ENCODE measurements at regions of chr7 and their contacts with region 1.

Region 1: GRCh38 chr7:2844165-2844898 is at the start of gene GNA12:
- DNase-seq: peak; percentile 97 to 100 (median 99)
- H3K4me3 ChIP-seq: peak within 1 kb of the TSS; percentile 35 to 90 (median 76)
- H3K27ac ChIP-seq: peak within 1 kb of the TSS in 38 of 59 donors; percentile 5 to 85 (median 65)
- H3K27me3 ChIP-seq: no peaks in the 10 kb centered on the region
- CTCF ChIP-seq: peak in 15 of 56 donors; percentile 4 to 32 (median 18)
- total RNA-seq, gene GNA12: 45.2 to 162 (median 67.4) TPM

Region 2: DNA sequence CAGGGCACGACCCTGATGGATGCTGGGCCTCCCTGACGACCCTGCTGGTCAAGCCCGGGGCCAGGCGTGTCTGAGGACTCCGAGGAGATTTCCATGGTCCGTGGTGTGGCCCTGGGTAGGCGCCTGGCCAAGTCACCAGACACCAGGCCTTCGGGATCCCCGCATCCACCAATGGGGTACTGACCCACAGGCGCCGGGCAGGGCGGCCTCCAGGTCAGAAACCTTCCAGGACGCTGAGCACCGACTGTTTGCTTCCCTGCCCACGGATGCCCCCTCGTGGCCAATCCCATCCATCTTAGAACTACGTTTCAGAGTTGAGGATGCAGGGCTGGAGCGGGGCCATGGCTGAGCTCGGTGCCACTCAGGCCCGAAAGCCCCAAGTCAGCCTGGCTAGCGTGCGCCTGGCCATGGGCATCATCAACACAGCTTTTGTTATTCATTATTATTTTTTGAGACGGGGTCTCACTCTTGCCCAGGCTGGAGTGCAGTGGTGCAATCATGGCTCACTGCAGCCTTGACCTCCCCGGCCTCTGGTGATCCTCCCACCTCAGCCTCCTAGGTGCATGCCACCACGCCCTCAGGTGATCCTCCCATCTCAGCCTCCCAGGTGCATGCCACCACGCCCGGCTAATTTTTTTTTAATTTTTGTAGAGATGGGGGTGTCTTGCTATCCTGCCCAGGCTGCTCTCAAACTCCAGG is 163.4 kb before region 1 on chr7:
- intact Hi-C with region 1: loop called in 1 of 2 experiments (anchors 5 kb)
- DNase-seq: peak; percentile 80 to 90 (median 88)
- H3K4me3 ChIP-seq: peak overlapping the region in 13 of 59 donors; percentile 3 to 57 (median 42)
- H3K27ac ChIP-seq: peak overlapping the region in 55 of 59 donors; percentile 44 to 95 (median 90)
- H3K27me3 ChIP-seq: peaks cover 0 to 2% (median 0%) of the 10 kb centered on the region in 45 donors
- CTCF ChIP-seq: peak; percentile 56 to 92 (median 82)

Region 3: GRCh38 chr7:2709553-2710285 is 134.6 kb before region 1 on chr7:
- intact Hi-C with region 1: loop called in 1 of 2 experiments (anchors 10 kb)
- DNase-seq: peak in 9 of 10 donors; percentile 59 to 83 (median 66)
- H3K4me3 ChIP-seq: peak overlapping the region in 11 of 59 donors; percentile 6 to 43 (median 22)
- H3K27ac ChIP-seq: peak overlapping the region in 2 of 59 donors; percentile 57 to 70
- H3K27me3 ChIP-seq: no peaks in the 10 kb centered on the region
- CTCF ChIP-seq: peak; percentile 34 to 97 (median 86)

Region 4: DNA sequence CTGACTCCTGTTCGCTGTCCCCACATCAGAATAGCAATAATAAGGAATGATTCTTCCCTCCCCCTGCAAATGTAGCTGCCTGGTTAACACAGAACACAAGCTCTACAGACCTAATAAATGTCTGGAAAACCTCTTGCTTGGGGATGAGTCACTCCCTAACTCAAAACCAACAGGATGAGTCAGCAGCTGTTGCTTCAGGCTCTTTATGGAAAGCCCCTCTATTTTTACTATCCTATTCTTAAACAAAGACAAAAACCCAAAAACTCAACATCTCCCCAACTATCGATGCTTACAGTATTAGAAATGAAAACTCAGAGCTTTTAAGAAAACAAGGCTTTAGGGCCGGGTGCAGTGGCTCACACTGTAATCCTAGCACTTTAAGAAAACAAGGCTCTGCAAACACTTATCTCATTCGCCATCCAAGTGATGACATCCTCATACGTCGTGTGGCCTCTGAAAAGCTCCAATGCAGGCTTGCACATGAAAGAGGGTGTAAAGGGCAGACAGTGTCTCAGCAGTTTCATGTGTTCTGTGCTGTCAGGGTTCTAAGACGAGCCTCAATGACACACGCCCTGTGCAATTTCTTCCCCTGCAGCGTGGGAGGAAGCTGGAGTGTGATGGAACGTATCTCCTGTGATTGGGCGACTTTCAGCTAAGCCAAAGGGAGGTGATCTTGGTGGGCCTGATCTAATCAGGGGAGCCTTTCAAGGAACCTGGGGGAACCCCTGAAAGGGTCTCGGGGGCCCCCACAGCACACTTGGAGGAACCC is 86.2 kb before region 1 on chr7:
- intact Hi-C with region 1: loop called in 1 of 2 experiments (anchors 2 kb)
- DNase-seq: peak in 1 of 10 donors; percentile 36
- H3K4me3 ChIP-seq: peak overlapping the region in 13 of 59 donors; percentile 1 to 33 (median 16)
- H3K27ac ChIP-seq: peak overlapping the region in 58 of 59 donors; percentile 15 to 98 (median 84)
- H3K27me3 ChIP-seq: no peaks in the 10 kb centered on the region
- CTCF ChIP-seq: no peak